Upper lobe of right lung (tissue), 1 donor: ENCODE measurements at regions of chr5 and their contacts with region 1.

Region 1: DNA sequence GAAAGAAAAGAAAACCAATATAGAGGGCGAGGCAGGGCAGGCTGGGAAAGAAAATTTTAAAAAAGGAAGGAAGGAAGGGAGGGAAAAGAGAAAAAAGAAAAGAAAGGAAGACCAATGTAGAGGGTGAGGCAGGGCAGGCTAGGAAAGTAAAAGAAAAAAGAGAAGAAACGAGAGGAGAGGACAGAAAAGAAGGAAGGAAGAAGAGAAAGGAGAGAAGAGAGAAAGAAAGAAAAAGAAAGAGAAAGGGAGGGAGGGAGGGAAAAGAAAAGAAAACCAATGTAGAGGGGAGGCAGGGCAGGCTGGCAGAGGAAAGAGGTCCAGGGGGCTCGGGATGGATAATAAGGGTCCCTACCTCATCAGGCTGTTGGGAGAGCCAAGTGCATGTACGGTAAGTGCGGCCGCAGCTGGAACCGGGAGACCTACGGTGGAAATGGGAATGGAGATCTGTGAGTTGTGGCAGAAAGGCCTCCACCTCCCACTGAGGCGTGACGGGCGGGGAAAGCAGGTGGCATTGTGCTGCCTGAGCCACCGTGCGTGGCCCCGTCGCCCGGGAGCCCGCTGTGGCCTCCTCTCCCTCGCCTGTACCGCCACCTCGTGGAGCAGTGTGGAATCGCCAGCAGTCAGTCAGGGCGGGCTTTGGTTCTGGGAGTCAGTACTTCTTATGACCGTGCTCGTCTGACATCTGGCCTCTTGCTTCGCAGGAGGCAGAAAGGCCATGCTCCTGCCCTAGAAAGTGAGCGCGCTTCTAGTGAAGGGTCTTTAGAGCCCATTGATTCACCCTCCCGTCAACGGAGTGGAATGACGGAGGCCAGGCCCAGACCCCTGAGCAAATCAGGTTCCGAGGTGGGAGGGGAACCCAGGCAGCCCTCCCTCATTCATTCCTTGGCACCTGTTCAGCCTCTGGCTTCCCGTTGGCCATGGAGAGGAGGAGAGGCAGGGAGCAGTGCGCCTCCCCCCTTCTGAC is 10.4 kb upstream of the NHP2 start:
- DNase-seq: peak; percentile 92
- ATAC-seq: peak; percentile 100
- H3K4me3 ChIP-seq: no peak overlapping the region
- H3K27ac ChIP-seq: no peak overlapping the region
- H3K4me1 ChIP-seq: peaks cover 5% of the 10 kb centered on the region
- H3K27me3 ChIP-seq: peaks cover 20% of the 10 kb centered on the region
- CTCF ChIP-seq: peak; percentile 100

Region 2: GRCh38 chr5:178075840-178076548 is 88.1 kb before region 1 on chr5:
- intact Hi-C with region 1: loop called (anchors 5 kb)
- DNase-seq: peak; percentile 79
- ATAC-seq: peak; percentile 91
- H3K4me3 ChIP-seq: no peak overlapping the region
- H3K27ac ChIP-seq: no peak overlapping the region
- H3K4me1 ChIP-seq: no peaks in the 10 kb centered on the region
- H3K27me3 ChIP-seq: peaks cover 23% of the 10 kb centered on the region
- CTCF ChIP-seq: peak; percentile 88

Region 3: DNA sequence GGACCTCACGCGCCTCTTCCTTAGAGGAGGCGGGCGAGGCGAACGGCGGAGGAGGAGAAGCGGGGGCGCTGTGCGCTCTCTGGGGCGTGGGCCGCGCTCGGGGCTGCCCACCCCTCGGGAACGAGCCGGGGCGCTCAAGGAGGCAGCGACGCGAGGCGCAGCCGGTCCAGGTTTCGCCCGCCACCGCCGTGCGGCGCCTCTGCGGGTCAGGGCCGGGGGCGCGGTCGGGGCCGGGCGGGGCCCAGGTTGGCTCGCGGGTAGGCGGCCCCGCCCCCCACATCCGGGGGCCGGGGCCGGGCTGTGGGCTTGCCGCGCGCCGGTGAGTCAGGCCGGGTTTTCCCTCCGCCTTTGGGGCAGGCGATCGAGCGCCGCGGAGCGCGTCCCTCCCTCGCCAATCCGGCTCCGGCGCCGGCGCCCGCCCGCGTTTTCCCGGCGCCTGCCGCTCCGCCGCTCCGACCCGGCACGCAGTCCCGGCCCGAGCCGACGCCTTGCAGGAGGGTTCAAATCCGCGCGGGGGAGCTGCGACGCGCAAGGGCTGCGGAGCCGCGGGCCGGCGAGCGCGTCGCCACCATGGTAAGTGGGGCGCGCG is 50.8 kb before region 1 on chr5 and contains the start of gene N4BP3:
- intact Hi-C with region 1: loop called (anchors 2 kb)
- DNase-seq: peak; percentile 87
- ATAC-seq: peak; percentile 89
- H3K4me3 ChIP-seq: peak within 1 kb of the TSS; percentile 57
- H3K27ac ChIP-seq: peak within 1 kb of the TSS; percentile 42
- H3K4me1 ChIP-seq: peaks cover 27% of the 10 kb centered on the region
- H3K27me3 ChIP-seq: peaks cover 34% of the 10 kb centered on the region
- CTCF ChIP-seq: no peak
- total RNA-seq, gene N4BP3: 5.2 TPM

Region 4: GRCh38 chr5:178213003-178213449 is 49.0 kb after region 1 on chr5:
- intact Hi-C with region 1: no loop called
- DNase-seq: no peak
- ATAC-seq: no peak
- H3K4me3 ChIP-seq: no peak overlapping the region
- H3K27ac ChIP-seq: no peak overlapping the region
- H3K4me1 ChIP-seq: peaks cover 1% of the 10 kb centered on the region
- H3K27me3 ChIP-seq: no peaks in the 10 kb centered on the region
- CTCF ChIP-seq: no peak

Region 5: DNA sequence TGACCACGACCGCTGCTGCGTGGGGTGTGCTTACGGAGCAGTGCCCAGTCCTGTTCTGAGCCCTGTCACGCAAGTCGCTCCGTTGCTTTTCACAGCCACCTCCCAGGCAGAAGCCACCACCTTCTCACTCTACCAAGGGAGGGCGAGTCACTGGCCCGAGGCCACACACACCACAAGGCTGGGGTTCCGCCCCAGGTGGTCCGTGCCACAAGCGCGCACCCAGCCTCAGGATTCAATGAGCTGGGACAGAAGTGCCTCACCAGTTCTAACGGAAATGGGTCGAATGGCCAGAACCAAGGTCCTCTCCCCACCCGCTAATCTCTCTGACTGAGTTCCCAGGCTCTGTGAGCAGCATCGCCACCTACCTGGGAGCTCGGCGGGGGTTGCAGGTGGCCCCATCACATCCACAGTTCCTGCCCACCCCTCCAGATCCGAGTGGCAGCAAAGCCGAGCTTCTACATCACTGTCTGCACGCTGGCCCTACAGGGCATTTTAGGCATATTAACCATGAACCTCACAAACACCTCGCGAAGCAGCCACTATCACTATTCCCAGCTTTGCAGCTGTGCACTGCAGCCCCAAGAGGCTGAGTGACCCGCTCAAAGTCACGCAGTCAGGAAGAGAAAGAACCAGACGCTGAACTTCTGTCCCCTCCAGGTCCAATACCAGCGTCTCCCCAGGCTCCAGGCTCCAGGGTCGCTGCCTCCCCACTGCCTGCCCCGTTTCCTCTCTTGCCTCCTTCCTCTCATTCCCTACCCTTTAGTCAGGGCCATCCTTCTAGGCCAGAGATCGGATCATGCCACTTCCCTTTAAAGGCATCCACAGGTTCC is 160.6 kb after region 1 on chr5:
- intact Hi-C with region 1: no loop called
- DNase-seq: peak; percentile 55
- ATAC-seq: no peak
- H3K4me3 ChIP-seq: no peak overlapping the region
- H3K27ac ChIP-seq: no peak overlapping the region
- H3K4me1 ChIP-seq: peaks cover 25% of the 10 kb centered on the region
- H3K27me3 ChIP-seq: no peaks in the 10 kb centered on the region
- CTCF ChIP-seq: no peak

Region 6: DNA sequence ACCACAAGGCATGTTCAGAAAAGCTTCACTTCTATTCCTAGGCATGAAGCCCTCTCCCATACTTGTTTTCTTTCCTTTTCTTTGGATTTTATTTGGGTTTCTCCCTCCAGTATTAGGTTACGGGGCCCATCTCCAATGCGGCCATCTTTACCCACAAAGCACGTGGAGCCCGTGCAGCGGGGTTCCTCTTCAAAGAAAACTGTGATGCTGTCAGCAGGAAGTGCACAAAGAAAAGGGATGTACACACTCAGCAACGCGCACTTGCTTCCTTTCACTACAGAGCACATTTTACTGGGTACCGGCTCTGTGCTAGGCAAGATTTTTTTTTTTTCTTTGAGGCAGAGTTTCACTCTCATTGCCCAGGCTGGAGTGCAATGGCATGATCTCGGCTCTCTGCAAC is 319.6 kb after region 1 on chr5:
- intact Hi-C with region 1: no loop called
- DNase-seq: no peak
- ATAC-seq: peak; percentile 86
- H3K4me3 ChIP-seq: no peak overlapping the region
- H3K27ac ChIP-seq: no peak overlapping the region
- H3K4me1 ChIP-seq: no peaks in the 10 kb centered on the region
- H3K27me3 ChIP-seq: no peaks in the 10 kb centered on the region
- CTCF ChIP-seq: no peak